B cell (primary cell): ENCODE measurements at regions of chr3 and their contacts with region 1.

Region 1: DNA sequence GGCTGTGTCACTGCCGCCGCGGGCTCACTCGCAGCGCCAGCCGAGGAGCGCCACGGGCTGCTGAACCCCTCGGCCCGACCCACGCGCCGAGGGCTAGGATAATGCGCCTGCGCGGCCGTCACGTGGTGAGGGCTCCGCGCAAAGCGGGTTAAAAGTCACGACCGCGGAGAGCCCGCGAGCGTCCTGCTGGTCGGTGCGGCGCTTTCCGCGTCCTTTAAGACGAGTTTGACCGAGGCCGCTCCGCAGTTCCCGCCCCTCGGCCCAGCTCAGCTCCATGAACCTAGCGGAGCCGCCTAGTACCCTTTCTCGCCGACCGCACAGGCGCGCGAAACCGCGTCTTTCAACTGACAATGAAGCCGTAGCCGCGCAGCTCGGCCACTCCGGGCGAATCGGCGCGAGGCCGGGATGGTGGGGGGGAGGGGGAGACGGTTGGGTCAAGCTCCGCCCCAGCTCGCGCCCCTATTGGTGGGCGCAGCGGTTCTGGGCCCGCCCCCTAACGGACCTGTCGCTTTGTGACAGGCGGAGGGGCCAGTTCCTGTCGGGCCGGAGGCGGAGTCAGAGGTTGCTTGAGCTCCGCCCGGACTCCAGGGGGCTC is 636 bp upstream of the STT3B start:
- DNase-seq: peak; percentile 99
- ATAC-seq: peak; percentile 84
- H3K4me3 ChIP-seq: peak overlapping the region; percentile 36 to 86 (median 82)
- H3K4me3 Mint-ChIP-seq: peak overlapping the region; percentile 98
- H3K27ac ChIP-seq: peak overlapping the region; percentile 94 to 98
- H3K27ac Mint-ChIP-seq: peak overlapping the region; percentile 99
- H3K4me1 ChIP-seq: peaks cover 36 to 37% of the 10 kb centered on the region in 2 donors
- H3K4me1 Mint-ChIP-seq: peaks cover 31% of the 10 kb centered on the region
- H3K27me3 ChIP-seq: no peaks in the 10 kb centered on the region
- H3K27me3 Mint-ChIP-seq: peaks cover 3% of the 10 kb centered on the region
- CTCF ChIP-seq: no peak

Region 2: GRCh38 chr3:31227131-31227562 is 304.9 kb before region 1 on chr3:
- CTCF ChIA-PET with region 1: interaction called, 5 read pairs
- POLR2A ChIA-PET with region 1: interaction called, 16 read pairs
- intact Hi-C with region 1: loop called (anchors 1 kb)
- DNase-seq: peak; percentile 90
- ATAC-seq: peak; percentile 83
- H3K4me3 ChIP-seq: peak overlapping the region in 2 of 5 experiments; percentile 6 to 8
- H3K4me3 Mint-ChIP-seq: peak overlapping the region; percentile 80
- H3K27ac ChIP-seq: peak overlapping the region; percentile 86 to 91
- H3K27ac Mint-ChIP-seq: peak overlapping the region; percentile 99
- H3K4me1 ChIP-seq: peaks cover 77 to 84% of the 10 kb centered on the region in 2 donors
- H3K4me1 Mint-ChIP-seq: peaks cover 76% of the 10 kb centered on the region
- H3K27me3 ChIP-seq: no peaks in the 10 kb centered on the region
- H3K27me3 Mint-ChIP-seq: no peaks in the 10 kb centered on the region
- CTCF ChIP-seq: no peak

Region 3: DNA sequence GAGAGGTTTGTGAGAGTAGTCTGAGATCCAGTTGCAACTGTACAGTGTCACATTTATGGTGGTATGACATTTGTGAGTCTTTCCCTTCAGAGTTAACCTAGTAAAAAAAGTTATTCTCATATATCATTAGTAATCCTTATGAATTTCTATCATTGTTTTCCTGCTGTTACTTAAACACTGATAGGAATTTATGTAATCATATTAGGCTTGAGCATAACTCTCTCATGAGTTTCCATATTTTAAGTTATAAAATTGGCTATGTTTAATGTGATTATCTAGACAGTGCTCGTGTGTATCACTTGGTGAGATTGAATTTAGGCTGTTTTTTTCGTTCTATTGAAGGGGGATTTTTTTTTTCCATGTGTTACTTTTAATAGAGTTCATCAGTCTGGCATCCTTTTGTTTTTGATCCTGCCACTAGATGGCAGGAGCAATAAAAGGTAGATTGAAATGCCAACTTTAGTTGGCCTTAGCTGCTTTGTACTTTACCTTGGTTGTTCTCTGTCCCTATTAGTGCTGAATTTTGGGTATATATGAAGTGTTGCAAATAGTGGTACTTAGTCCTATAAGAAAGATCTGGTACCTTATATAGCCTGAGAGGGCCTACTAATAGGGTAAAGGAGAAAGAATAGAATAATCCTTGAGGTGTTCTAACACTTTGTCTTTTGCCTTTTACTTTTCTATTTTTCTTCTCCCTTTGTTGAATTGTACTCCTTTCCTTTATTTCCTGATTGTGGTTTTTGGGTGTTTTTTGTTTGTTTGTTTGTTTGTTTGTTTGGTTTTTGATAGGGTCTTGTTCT is 18.6 kb after region 1 on chr3:
- CTCF ChIA-PET with region 1: interaction called, 12 read pairs
- POLR2A ChIA-PET with region 1: interaction called, 3 read pairs
- intact Hi-C with region 1: loop called (anchors 1 kb)
- DNase-seq: peak; percentile 51
- ATAC-seq: peak; percentile 33
- H3K4me3 ChIP-seq: no peak overlapping the region
- H3K4me3 Mint-ChIP-seq: no peak overlapping the region
- H3K27ac ChIP-seq: peak overlapping the region in 1 of 2 donors; percentile 52
- H3K27ac Mint-ChIP-seq: peak overlapping the region; percentile 73
- H3K4me1 ChIP-seq: peaks cover 10 to 18% of the 10 kb centered on the region in 2 donors
- H3K4me1 Mint-ChIP-seq: peaks cover 63% of the 10 kb centered on the region
- H3K27me3 ChIP-seq: no peaks in the 10 kb centered on the region
- H3K27me3 Mint-ChIP-seq: no peaks in the 10 kb centered on the region
- CTCF ChIP-seq: peak; percentile 82

Region 4: DNA sequence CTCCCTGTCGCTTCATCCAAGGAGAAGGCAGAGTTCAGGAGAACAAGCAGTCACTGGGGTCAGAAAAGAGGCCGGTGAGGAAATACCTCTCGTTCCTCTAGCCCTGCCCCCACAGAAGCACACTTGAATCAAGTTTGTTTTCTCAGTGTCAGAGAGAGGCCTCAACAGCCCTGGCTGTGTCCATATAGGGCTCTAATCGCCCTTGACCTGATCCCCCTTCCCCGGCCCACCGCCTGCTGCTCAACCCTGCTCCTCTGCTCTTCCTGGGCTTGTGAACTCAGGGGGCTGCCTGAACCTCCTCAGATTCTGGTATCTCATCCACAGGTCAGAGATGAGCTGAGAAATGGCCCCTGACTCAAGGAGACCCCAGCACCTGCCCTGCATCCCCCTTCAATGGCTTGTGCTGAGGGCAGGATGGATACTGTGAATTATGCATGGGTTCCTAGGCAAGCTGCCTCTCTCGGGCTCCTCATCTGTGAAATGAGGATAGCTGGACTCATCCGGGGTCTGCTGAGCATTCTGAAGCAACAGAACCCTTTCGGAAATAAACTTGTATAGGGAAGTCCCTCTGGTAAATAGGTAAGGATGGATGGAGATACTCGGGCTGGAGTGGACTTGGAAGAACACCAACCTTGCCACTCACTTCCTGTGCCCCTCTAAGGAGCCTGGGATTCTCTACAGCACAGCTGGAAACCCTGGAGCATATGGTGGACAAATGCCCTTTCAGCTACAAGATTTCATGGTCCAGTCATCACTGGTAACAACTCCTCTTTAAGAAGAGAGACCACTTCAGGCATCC is 148.2 kb after region 1 on chr3:
- CTCF ChIA-PET with region 1: no interaction called
- POLR2A ChIA-PET with region 1: no interaction called
- intact Hi-C with region 1: no loop called
- DNase-seq: no peak
- ATAC-seq: no peak
- H3K4me3 ChIP-seq: no peak overlapping the region
- H3K4me3 Mint-ChIP-seq: no peak overlapping the region
- H3K27ac ChIP-seq: no peak overlapping the region
- H3K27ac Mint-ChIP-seq: peak overlapping the region; percentile 26
- H3K4me1 ChIP-seq: no peaks in the 10 kb centered on the region
- H3K4me1 Mint-ChIP-seq: no peaks in the 10 kb centered on the region
- H3K27me3 ChIP-seq: no peaks in the 10 kb centered on the region
- H3K27me3 Mint-ChIP-seq: no peaks in the 10 kb centered on the region
- CTCF ChIP-seq: no peak

Region 5: GRCh38 chr3:31831598-31831997 is 299.5 kb after region 1 on chr3:
- CTCF ChIA-PET with region 1: no interaction called
- POLR2A ChIA-PET with region 1: no interaction called
- intact Hi-C with region 1: no loop called
- DNase-seq: no peak
- ATAC-seq: no peak
- H3K4me3 ChIP-seq: no peak overlapping the region
- H3K4me3 Mint-ChIP-seq: no peak overlapping the region
- H3K27ac ChIP-seq: no peak overlapping the region
- H3K27ac Mint-ChIP-seq: no peak overlapping the region
- H3K4me1 ChIP-seq: peaks cover 0 to 4% of the 10 kb centered on the region in 2 donors
- H3K4me1 Mint-ChIP-seq: peaks cover 42% of the 10 kb centered on the region
- H3K27me3 ChIP-seq: no peaks in the 10 kb centered on the region
- H3K27me3 Mint-ChIP-seq: no peaks in the 10 kb centered on the region
- CTCF ChIP-seq: no peak

Region 6: GRCh38 chr3:31960793-31961431 is 428.8 kb after region 1 on chr3:
- CTCF ChIA-PET with region 1: interaction called, 4 read pairs
- POLR2A ChIA-PET with region 1: no interaction called
- intact Hi-C with region 1: loop called (anchors 10 kb)
- DNase-seq: peak; percentile 71
- ATAC-seq: peak; percentile 65
- H3K4me3 ChIP-seq: peak overlapping the region in 3 of 5 experiments; percentile 34 to 60 (median 36)
- H3K4me3 Mint-ChIP-seq: peak overlapping the region; percentile 89
- H3K27ac ChIP-seq: peak overlapping the region; percentile 56 to 88
- H3K27ac Mint-ChIP-seq: peak overlapping the region; percentile 95
- H3K4me1 ChIP-seq: peaks cover 76 to 84% of the 10 kb centered on the region in 2 donors
- H3K4me1 Mint-ChIP-seq: peaks cover 77% of the 10 kb centered on the region
- H3K27me3 ChIP-seq: no peaks in the 10 kb centered on the region
- H3K27me3 Mint-ChIP-seq: no peaks in the 10 kb centered on the region
- CTCF ChIP-seq: no peak

Region 7: DNA sequence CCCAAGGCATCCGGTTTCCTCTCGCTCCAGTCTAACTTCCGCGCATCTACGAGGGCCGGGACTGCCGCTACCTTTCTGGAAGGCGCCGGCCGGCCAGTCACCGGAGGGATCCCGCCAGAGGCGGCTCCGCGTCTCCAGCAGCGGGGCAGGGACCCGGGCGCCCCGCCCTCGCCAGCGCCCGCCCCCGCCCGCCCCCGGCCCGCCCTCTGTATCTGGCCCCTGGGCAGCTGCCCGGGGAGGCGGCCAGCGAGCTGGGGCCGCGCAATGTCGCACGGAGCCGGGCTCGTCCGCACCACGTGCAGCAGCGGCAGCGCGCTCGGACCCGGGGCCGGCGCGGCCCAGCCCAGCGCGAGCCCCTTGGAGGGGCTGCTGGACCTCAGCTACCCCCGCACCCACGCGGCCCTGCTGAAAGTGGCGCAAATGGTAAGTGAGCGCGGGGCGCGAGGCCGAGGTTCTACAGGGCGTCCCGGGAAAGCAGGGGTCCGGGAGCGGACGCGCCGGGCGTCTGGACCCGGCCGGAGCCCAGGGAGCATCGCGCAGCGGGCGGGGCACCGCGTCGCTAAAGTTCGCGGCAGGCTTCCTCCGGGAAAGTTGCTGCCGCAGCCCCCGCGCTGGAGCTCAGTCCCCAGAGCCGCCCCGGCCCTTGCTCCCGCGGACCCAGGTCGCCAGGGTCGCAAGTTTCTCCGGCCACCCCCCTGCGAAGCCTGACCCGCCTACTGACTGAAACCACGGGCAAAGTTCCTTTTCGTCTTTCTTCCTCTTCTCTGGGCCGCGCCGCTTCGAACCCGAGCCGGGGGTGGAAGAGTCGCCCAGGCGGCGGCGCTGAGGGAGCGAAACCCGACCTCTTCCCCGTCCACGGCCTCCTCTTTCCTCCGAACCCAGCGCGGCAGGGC is 859.8 kb after region 1 on chr3 and contains the start of gene CMTM7:
- CTCF ChIA-PET with region 1: no interaction called
- POLR2A ChIA-PET with region 1: no interaction called
- intact Hi-C with region 1: loop called (anchors 10 kb)
- DNase-seq: peak; percentile 71
- ATAC-seq: peak; percentile 63
- H3K4me3 ChIP-seq: peak within 1 kb of the TSS; percentile 42 to 92 (median 73)
- H3K4me3 Mint-ChIP-seq: peak within 1 kb of the TSS; percentile 96
- H3K27ac ChIP-seq: peak within 1 kb of the TSS; percentile 72 to 82
- H3K27ac Mint-ChIP-seq: peak within 1 kb of the TSS; percentile 97
- H3K4me1 ChIP-seq: peaks cover 28 to 40% of the 10 kb centered on the region in 2 donors
- H3K4me1 Mint-ChIP-seq: peaks cover 52% of the 10 kb centered on the region
- H3K27me3 ChIP-seq: no peaks in the 10 kb centered on the region
- H3K27me3 Mint-ChIP-seq: no peaks in the 10 kb centered on the region
- CTCF ChIP-seq: no peak
- total RNA-seq, gene CMTM7: 68.4 and 71.5 TPM in 2 replicates